A549 (cell line): ENCODE measurements at regions of chr20 and their contacts with region 1.

Region 1: GRCh38 chr20:4076671-4077070 is 61.3 kb upstream of the RNF24 start:
- DNase-seq: no peak
- ATAC-seq: peak; percentile 10 to 16; a peak in 1 of 6 replicates
- H3K4me3 ChIP-seq: no peak overlapping the region
- H3K27ac ChIP-seq: no peak overlapping the region
- H3K4me1 ChIP-seq: peaks cover 5% of the 10 kb centered on the region
- CTCF ChIP-seq: no peak
- EP300 ChIP-seq: no peak
- POLR2A ChIP-seq: no peak
- RAD21 ChIP-seq: no peak

Region 2: DNA sequence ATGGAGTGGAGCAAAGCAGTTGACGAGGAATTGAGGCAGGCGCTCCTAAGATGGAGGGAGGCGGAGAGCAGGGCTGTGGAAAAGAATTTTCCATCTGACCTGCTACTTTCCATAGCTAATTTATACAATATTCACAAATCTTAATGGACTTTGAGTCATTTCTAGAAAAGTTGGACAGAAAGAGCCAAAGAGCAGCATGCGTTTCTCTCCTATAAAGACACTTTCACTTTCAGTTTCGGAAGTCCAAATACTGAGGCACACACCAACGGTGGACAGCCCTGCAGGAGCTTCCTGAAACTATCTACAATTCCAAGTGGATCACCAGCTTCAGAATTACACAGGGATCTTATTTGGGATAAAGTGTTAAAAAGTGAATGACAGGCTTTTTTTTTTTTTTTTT is 144.0 kb before region 1 on chr20:
- CTCF ChIA-PET with region 1: interaction called, 14 read pairs
- POLR2A ChIA-PET with region 1: no interaction called
- DNase-seq: no peak
- ATAC-seq: no peak
- H3K4me3 ChIP-seq: no peak overlapping the region
- H3K27ac ChIP-seq: peak overlapping the region; percentile 14 to 26; a peak in 2 of 6 replicates
- H3K4me1 ChIP-seq: peaks cover 6% of the 10 kb centered on the region; the same call in 2 of the 3 replicates
- CTCF ChIP-seq: no peak
- EP300 ChIP-seq: no peak
- POLR2A ChIP-seq: no peak
- RAD21 ChIP-seq: no peak

Region 3: GRCh38 chr20:4053071-4053919 is 23.4 kb before region 1 on chr20:
- CTCF ChIA-PET with region 1: interaction called, 31 read pairs
- POLR2A ChIA-PET with region 1: no interaction called
- DNase-seq: no peak
- ATAC-seq: 0 out of 6 replicates have a peak, but pooled peaks of 1 of the 2 experiments have one; percentile 27
- H3K4me3 ChIP-seq: no peak overlapping the region
- H3K27ac ChIP-seq: no peak overlapping the region
- H3K4me1 ChIP-seq: no peaks in the 10 kb centered on the region
- CTCF ChIP-seq: no peak
- EP300 ChIP-seq: no peak
- POLR2A ChIP-seq: no peak
- RAD21 ChIP-seq: no peak